IMR-90 (cell line): ENCODE measurements at regions of chr5 and their contacts with region 1.

Region 1: GRCh38 chr5:59506285-59506877 is 387.1 kb downstream of the PDE4D start:
- DNase-seq: peak; percentile 28
- ATAC-seq: no peak
- H3K4me3 ChIP-seq: no peak overlapping the region
- H3K27ac ChIP-seq: no peak overlapping the region
- H3K4me1 ChIP-seq: no peaks in the 10 kb centered on the region
- H3K27me3 ChIP-seq: no peaks in the 10 kb centered on the region
- CTCF ChIP-seq: peak; percentile 54
- POLR2A ChIP-seq: no peak
- RAD21 ChIP-seq: peak; percentile 57

Region 2: DNA sequence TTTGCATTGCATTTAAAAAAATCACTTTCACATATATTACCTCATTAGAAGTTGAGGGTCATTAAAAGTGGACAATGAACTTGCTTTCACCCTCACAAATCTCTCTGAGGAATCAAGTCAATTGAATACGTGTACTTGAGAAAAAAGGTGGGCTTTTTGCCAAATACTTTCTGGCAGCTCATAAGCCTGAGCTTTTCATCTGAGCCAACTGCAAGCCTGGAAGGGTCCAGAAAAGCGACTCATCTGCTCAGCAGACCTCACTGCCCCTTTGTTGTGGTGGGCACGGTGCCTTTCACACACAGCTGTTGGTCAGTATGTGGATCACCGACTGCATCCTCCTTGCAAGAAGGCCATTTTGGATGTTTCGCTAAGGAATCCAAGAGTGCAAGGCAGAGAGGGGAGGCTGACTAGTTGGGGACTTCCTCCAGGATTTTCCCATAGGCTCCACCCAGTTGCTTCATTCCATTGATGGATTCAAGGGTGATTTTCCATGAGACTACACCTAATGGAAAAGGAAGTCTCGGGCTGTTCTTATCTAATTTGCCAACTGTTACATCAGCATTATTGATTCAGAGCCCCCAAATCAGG is 177.6 kb before region 1 on chr5:
- CTCF ChIA-PET with region 1: no interaction called
- POLR2A ChIA-PET with region 1: no interaction called
- dilution Hi-C with region 1: no loop called
- in situ Hi-C with region 1: no loop called
- intact Hi-C with region 1: no loop called
- DNase-seq: peak; percentile 50
- ATAC-seq: no peak
- H3K4me3 ChIP-seq: no peak overlapping the region
- H3K27ac ChIP-seq: no peak overlapping the region
- H3K4me1 ChIP-seq: no peaks in the 10 kb centered on the region
- H3K27me3 ChIP-seq: 0 out of 2 replicates have a peak, but pooled peaks cover 1% of the 10 kb centered on the region
- CTCF ChIP-seq: no peak
- POLR2A ChIP-seq: no peak
- RAD21 ChIP-seq: no peak

Region 3: GRCh38 chr5:59341155-59341554 is 165.2 kb before region 1 on chr5:
- CTCF ChIA-PET with region 1: no interaction called
- POLR2A ChIA-PET with region 1: no interaction called
- dilution Hi-C with region 1: no loop called
- in situ Hi-C with region 1: no loop called
- intact Hi-C with region 1: no loop called
- DNase-seq: no peak
- ATAC-seq: no peak
- H3K4me3 ChIP-seq: no peak overlapping the region
- H3K27ac ChIP-seq: no peak overlapping the region
- H3K4me1 ChIP-seq: no peaks in the 10 kb centered on the region
- H3K27me3 ChIP-seq: no peaks in the 10 kb centered on the region
- CTCF ChIP-seq: no peak
- POLR2A ChIP-seq: no peak
- RAD21 ChIP-seq: no peak

Region 4: GRCh38 chr5:59430066-59430685 is 76.2 kb before region 1 on chr5:
- CTCF ChIA-PET with region 1: no interaction called
- POLR2A ChIA-PET with region 1: no interaction called
- dilution Hi-C with region 1: no loop called
- in situ Hi-C with region 1: no loop called
- intact Hi-C with region 1: no loop called
- DNase-seq: no peak
- ATAC-seq: no peak
- H3K4me3 ChIP-seq: no peak overlapping the region
- H3K27ac ChIP-seq: no peak overlapping the region
- H3K4me1 ChIP-seq: no peaks in the 10 kb centered on the region
- H3K27me3 ChIP-seq: no peaks in the 10 kb centered on the region
- CTCF ChIP-seq: no peak
- POLR2A ChIP-seq: no peak
- RAD21 ChIP-seq: no peak

Region 5: GRCh38 chr5:59673438-59674058 is 167.2 kb after region 1 on chr5:
- CTCF ChIA-PET with region 1: interaction called, 7 read pairs
- POLR2A ChIA-PET with region 1: no interaction called
- dilution Hi-C with region 1: no loop called
- in situ Hi-C with region 1: loop called (anchors 25 kb)
- intact Hi-C with region 1: loop called (anchors 1 kb)
- DNase-seq: peak; percentile 49
- ATAC-seq: peak; percentile 60
- H3K4me3 ChIP-seq: no peak overlapping the region
- H3K27ac ChIP-seq: no peak overlapping the region
- H3K4me1 ChIP-seq: no peaks in the 10 kb centered on the region
- H3K27me3 ChIP-seq: no peaks in the 10 kb centered on the region
- CTCF ChIP-seq: peak; percentile 78
- POLR2A ChIP-seq: no peak
- RAD21 ChIP-seq: peak; percentile 71

Region 6: DNA sequence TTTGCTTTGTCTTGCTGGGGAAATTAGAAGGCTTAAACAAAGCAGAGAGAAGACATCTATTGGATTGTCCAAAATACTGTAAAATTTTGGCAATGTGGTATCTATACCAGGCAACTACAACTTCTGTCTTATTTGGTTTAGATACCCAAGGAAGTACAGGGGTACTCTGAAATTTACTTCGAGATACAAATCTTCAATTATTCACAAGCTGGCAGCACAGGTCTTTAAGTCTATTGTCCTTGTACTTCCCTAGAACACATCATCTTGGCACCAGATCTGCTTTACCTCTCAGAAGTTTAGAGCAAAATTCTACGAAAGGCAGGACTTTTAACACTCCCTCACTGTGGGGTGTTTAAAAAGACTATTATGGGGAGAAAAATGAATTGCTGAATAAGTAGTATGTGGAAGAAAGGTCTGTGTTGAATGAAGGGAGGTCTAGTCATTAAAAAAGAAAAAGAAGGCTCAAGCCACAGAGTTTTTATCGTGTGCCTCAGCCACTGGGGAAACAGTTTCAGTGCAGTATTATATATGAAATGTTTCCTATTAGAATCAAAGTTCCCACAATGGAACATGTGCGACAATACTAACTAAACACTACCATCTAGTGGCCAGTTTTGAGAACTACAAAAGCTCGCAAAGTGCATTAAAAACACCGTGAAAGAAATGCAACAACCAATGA is 293.4 kb after region 1 on chr5:
- CTCF ChIA-PET with region 1: interaction called, 3 read pairs
- POLR2A ChIA-PET with region 1: no interaction called
- dilution Hi-C with region 1: no loop called
- in situ Hi-C with region 1: loop called (anchors 25 kb)
- intact Hi-C with region 1: loop called (anchors 1 kb)
- DNase-seq: peak; percentile 57
- ATAC-seq: peak; percentile 81
- H3K4me3 ChIP-seq: no peak overlapping the region
- H3K27ac ChIP-seq: no peak overlapping the region
- H3K4me1 ChIP-seq: no peaks in the 10 kb centered on the region
- H3K27me3 ChIP-seq: no peaks in the 10 kb centered on the region; the same call in none of the 2 replicates
- CTCF ChIP-seq: peak; percentile 83
- POLR2A ChIP-seq: no peak
- RAD21 ChIP-seq: peak; percentile 78